Cardiac septum (tissue), 1 donor: ENCODE measurements at regions of chr18 and their contacts with region 1.

Region 1: DNA sequence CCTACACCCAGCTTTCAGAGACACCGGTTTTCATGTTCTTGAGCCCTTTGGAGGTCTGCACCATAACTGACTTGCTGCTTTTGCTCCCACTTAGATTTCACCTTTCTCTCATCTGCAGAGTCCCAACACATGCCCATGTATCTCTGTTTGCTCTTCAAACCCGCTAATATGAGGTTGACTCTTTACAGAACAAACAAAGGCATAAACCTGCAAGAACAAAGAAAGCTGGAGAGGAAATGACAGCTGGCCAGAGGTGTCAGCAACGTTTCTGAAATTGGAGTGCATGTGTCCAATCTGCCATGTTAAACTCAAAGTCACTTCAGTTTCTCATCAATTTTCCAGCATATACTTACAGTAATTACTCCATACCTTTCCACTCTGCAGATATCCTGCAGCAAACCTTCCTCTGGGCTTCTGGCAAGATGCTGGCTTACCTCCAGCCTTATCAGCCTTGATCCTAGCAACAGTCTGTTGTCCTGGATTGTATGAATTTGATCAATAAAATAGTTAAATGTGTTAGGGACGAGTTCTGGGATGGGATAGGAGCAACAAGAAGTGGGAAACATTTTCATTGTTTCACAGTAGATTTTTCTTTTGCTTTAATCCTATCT is 157.4 kb downstream of the FHOD3 start:
- DNase-seq: no peak

Region 2: GRCh38 chr18:36419905-36420531 is 34.9 kb before region 1 on chr18:
- intact Hi-C with region 1: loop called (anchors 5 kb)
- DNase-seq: no peak

Region 3: DNA sequence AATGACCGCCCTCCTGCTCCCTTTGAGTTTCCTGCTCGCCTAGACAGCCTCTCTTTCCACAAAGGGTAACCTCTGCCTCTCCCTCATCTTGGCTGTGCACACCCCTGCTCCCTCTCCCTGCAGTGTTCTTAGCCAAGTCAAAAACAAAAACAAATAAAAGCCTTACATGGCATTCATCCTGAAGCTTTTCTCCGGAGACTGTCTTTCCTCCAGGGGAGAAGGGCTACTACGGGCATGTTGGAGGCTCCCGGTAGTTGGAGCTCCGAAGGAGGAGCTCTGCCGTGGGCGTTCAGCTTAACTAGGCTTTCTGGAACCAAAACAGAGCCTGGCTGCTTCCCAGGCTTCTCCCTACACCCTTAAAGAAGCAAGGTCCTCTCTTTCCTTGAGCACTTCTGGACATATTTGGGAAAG is 269.6 kb after region 1 on chr18:
- intact Hi-C with region 1: no loop called
- DNase-seq: peak; percentile 74